ENCODE measurements at regions of chr19 and their contacts with region 1.

Region 1: DNA sequence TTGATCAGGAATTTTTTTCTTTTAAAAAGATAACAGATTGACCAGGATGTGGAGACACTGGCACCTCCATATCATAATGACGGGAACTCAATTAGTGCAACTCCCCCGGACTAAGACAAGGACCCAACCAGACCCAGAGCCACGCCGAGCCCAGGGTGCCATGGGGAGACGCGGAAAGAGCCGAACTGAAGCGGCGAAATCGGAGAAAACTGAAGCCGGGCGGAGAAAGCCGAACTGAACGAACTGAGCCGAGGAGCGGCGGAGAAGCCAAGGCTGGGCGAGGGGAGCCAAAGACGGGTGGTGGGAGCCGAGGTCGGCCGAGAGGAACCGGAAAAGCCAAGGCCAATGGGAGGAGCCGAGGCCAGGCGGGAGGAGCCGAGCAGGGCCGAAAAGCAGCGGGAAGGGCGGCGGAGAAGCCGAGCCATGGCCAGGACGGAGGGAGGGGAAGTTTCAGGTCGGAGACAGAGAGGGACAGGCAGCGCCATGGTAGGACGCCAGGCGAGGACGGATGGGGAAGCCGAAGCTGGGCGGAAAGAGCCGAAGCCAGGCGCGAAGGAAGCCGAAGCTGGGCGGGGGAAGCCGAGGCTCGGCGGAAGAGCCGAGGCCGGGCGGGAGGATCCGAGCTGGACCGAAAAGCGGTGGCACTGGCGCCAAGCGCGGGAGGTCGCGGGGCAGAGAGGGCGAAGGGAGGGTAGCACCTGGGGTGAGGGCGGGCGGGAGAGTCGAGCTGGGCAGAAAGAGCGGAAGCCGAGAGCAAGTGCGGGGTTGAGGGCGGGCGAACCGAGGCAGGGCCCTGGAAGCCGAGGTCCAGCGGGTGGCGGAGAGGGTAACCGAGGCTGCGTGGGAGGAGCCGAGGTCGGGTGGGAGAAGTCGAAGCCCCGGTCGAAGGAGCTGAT is 29.4 kb downstream of the ZNF557 start:
- DNase-seq: peak; percentile 59 to 92
- H3K4me3 ChIP-seq: peak overlapping the region; percentile 67 to 70
- H3K27ac ChIP-seq: peak overlapping the region; percentile 89 to 91
- H3K4me1 ChIP-seq: peaks cover 0 to 2% of the 10 kb centered on the region in 2 donors
- H3K27me3 ChIP-seq: no peaks in the 10 kb centered on the region
- CTCF ChIP-seq: no peak

Region 2: DNA sequence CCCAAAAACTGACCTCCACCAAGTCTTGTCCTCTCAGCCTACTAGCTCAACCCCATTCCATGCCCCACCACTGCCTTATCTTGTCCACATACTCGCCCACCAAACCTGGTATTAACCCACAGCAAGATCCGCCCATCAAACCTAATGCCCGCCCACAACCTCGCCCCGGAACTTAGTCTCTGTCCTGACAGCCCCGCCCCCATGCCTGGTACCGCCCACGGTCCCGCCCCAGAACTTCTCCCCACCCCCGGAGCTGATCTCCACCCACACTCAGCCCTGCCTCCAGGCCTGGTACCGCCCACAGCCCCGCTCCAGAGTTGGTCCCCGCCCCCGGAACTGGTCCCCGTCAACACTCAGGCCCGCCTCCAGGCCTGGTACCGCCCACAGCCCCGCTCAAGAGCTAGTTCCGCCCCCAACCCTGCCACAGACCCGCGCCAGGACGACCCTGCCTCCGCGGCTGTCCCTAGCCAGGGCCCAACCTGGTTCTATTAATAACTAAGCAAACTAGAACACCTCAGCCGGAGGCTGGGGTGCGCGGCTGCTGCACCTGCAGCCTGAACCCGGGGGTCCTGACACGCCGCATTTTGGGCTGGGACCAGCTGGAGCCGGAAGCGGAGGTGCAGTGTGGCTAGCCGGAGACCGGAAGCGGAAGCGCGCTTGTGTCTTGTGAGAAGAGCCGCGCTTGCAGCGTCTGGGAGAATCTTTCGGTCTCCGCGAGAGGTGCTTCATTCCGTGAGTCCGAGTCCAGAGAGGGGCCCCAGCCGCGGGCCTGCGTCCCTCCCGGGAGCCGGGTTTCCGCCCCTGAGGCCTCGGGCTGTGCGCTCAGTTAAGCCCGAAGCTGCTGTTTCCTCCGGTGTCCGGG is 29.7 kb before region 1 on chr19 and contains the start of gene ZNF557:
- intact Hi-C with region 1: loop called (anchors 1 kb)
- DNase-seq: peak; percentile 95 to 99
- H3K4me3 ChIP-seq: peak within 1 kb of the TSS; percentile 74 to 83
- H3K27ac ChIP-seq: peak within 1 kb of the TSS; percentile 52 to 69
- H3K4me1 ChIP-seq: peaks cover 0 to 6% of the 10 kb centered on the region in 2 donors
- H3K27me3 ChIP-seq: no peaks in the 10 kb centered on the region
- CTCF ChIP-seq: no peak
- total RNA-seq, gene ZNF557: 0.75 TPM

Region 3: DNA sequence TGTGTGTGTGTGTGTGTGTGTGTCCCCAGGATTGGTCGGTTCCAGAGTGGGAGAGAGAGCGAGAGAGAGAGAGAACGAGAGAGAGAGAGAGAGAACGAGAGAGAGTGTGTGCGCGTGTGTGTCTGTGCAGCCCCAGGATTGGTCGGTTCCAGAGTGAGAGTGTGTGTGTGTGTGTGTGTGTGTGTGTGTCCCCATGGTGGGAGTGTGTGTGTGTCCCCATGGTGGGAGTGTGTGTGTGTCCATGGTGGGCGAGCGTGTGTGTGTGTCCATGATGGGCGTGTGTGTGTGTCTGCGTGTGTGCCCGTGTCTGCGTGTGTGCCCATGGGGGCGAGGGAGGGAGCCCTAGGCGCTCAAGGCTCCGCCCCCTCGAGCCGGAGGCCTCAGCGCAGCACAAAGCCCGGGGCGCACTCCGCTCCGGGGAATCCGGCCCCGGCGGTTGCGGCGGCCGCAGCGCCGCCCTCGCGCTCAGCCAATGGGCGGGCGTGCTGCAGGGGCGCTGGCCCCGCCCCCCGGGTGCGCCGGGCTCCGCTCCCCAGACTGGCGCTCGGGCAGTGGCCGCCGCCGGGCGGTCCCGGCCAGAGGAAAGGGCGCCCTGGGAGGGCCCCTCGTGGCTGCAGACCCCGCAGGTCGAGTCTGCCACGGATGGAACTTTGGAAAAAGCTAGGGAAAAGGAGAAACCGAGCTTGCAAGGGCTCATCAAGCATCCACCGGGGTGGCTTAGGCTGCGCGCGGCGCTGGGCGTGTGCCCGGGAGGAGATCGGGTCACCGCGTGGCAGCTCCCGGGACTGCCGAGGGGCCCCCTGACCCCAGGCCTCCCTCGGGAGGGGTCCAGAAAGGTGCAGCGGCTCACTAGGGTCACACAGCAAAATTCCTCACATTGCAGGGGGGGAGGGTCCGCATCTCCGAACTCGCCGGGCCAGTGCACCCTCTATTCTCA is 99.1 kb after region 1 on chr19:
- intact Hi-C with region 1: loop called (anchors 1 kb)
- DNase-seq: peak; percentile 77 to 96
- H3K4me3 ChIP-seq: peak overlapping the region; percentile 81 to 83
- H3K27ac ChIP-seq: peak overlapping the region; percentile 93 to 94
- H3K4me1 ChIP-seq: peaks cover 4 to 9% of the 10 kb centered on the region in 2 donors
- H3K27me3 ChIP-seq: no peaks in the 10 kb centered on the region
- CTCF ChIP-seq: peak; percentile 12 to 40 (median 32)

Region 4: DNA sequence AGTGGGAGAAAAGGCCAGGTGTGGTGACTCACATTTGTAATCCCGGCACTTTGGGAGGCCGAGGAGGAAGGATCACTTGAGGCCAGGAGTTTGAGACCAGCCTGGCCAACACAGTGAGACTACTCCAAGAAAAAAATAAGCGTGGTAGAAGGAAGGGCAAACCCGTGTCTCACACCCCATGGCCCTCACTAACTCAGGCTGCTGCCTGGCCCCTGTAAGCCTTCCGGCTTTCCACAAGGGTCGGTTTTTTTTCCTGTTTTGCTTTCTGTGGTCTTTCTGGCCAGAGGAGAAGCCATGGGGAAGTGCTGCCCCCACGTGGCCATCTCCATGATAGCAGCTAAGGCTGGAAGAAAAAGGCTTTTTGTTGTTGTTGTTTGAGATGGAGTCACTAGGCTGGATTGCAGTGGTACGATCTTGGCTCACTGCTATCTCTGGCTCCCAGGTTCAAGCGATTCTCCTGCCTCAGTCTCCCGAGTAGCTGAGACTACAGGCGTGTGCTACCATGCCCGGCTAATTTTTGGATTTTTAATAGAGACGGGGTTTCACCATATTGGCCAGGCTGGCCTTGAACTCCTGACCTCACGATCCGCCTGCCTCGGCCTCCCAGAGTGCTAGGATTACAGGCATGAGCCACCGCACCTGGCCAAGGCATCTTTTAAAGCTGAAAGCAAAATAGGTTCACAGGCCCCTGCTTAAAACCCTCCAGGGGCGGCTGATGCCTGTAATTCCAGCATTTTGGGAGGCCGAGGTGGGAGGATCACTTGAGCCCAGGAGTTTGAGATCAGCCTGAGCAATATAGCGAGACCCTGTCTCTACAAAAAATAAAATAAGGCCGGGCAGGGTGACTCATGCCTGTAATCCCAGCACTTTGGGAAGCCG is 242.2 kb after region 1 on chr19:
- intact Hi-C with region 1: loop called (anchors 1 kb)
- DNase-seq: peak in 1 of 2 donors; percentile 86
- H3K4me3 ChIP-seq: no peak overlapping the region
- H3K27ac ChIP-seq: no peak overlapping the region
- H3K4me1 ChIP-seq: peaks cover 0 to 5% of the 10 kb centered on the region in 2 donors
- H3K27me3 ChIP-seq: no peaks in the 10 kb centered on the region
- CTCF ChIP-seq: peak; percentile 87 to 96 (median 91)

Region 5: DNA sequence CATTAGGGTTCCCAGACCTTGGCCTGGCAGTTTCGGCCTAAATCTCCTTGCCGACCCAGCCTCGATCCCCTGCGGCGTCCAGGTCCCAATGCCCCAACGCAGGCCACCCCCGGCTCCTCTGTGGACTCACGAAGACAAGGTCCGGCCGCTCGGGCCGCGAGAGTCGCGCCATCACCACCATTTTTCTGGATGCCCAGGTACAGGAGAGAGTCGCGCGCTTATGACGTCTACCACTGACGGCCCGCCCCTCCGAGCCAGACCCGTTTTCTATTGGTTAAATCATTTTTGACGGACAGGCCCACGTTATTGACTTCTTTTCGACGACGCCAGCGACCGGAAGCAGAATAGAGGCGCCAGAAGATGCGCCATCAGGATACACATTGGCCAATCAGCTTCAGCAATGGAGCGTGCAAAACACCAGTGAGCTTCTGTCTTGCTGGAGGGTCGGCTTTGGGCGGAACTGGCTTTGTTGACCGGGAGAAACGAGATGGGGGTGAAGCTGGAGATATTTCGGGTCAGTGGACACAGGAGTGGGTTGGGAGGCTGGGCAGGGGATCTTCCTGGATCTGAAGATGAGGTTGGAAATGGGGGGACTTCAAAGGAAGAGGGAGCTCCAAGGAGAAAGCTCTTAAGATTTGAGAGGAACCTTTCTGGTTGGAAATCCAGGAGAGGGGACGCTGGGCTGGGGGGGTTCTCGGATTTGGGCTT is 530.6 kb after region 1 on chr19 and contains the starts of genes PET100 and XAB2:
- intact Hi-C with region 1: loop called (anchors 1 kb)
- DNase-seq: peak; percentile 95 to 99
- H3K4me3 ChIP-seq: peak within 1 kb of the TSS; percentile 94 to 96
- H3K27ac ChIP-seq: peak within 1 kb of the TSS; percentile 79 to 88
- H3K4me1 ChIP-seq: peaks cover 7 to 27% of the 10 kb centered on the region in 2 donors
- H3K27me3 ChIP-seq: no peaks in the 10 kb centered on the region
- CTCF ChIP-seq: no peak
- total RNA-seq, gene PET100: not detected
- total RNA-seq, gene XAB2: 18.4 TPM

Measured in ascending aorta (tissue), 2 donors.